IMR-90 (cell line): ENCODE measurements at regions of chr3 and their contacts with region 1.

Region 1: DNA sequence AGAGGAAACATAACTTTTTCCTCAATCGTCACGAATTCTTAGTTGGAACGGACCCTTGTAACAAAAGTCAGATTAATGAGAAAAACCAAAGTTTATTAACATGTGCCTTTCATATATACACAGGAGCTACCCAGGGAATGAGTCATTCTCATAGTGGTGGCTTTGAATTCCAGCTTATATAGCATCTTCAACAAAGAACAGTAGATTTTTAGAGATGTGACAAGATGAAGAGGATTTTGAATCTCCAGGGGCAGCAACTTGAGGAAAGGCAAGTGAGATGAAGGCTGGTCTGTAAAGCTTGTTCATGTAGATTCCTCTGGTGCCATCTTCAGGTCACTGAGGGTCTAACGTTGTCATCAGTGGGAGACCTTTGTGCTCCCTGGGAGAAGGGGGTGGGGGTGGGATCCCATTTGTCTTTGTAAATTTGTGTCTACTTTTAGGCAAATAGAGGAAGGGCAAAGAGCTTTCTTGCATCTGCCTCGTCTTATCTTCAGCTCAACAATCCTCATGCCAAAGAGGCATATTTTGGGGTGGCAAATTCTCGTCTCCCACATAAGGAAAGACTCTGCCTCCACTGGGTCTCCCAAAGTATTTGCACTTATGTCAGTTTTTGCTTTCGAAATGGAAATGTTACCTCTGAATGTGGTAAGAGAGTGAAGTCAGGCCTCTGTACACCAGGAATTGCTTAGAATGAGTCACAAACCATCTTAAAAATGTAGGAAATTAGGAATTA is 29.5 kb downstream of the CLEC3B start:
- DNase-seq: peak; percentile 96
- ATAC-seq: peak; percentile 68
- H3K4me3 ChIP-seq: peak overlapping the region; percentile 44; the same call in 1 of the 2 replicates
- H3K27ac ChIP-seq: peak overlapping the region; percentile 98
- H3K4me1 ChIP-seq: peaks cover 21% of the 10 kb centered on the region
- H3K27me3 ChIP-seq: no peaks in the 10 kb centered on the region
- CTCF ChIP-seq: peak; percentile 20; the same call in 1 of the 2 replicates
- POLR2A ChIP-seq: no peak
- RAD21 ChIP-seq: no peak

Region 2: GRCh38 chr3:45123030-45123429 is 67.5 kb after region 1 on chr3:
- CTCF ChIA-PET with region 1: no interaction called
- POLR2A ChIA-PET with region 1: interaction called, 3 read pairs
- dilution Hi-C with region 1: no loop called
- in situ Hi-C with region 1: loop called (anchors 5 kb)
- intact Hi-C with region 1: loop called (anchors 5 kb)
- DNase-seq: peak; percentile 98
- ATAC-seq: peak; percentile 68
- H3K4me3 ChIP-seq: no peak overlapping the region
- H3K27ac ChIP-seq: peak overlapping the region; percentile 95; the same call in 1 of the 2 replicates
- H3K4me1 ChIP-seq: peaks cover 42% of the 10 kb centered on the region
- H3K27me3 ChIP-seq: no peaks in the 10 kb centered on the region
- CTCF ChIP-seq: 0 out of 2 replicates have a peak, but pooled peaks have one; percentile 6
- POLR2A ChIP-seq: no peak; the same call in 1 of the 2 replicates
- RAD21 ChIP-seq: peak; percentile 6; the same call in 1 of the 2 replicates